Activated CD4-positive, alpha-beta memory T cell treated with anti-CD3 and anti-CD28 coated beads for 36 hours (primary cell): ENCODE measurements at regions of chr1 and their contacts with region 1.

Region 1: DNA sequence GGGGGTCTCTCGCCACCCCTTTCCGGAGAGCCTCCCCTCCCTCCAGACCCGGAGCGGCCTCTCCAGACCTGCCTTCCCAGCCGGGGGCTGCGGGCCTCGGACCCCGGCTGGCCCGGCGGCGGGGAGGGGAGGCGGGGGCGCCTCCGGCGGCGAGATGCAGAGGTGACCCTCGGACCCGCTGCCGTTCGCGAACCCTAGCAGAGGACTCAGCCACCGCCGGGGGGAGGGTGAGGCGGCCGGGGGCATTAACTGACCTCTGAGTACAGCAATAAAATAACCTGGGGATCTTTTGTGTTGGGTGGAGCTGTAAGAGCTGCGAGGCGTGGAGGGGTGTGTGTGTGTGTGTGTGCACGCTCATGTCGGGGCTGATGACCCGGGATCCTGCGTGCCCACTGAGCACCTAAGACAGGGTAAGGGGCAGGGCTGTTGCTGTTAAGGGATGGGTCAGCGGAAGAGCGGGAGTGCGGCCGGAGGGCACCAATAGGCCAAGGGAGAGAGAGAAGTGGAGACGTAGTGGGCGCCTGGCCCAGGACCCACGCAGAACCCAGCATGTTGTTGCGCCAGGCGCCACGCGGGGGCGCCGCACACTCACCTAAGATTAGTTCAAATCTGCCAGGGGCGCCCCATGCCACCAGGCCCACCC is 6.3 kb downstream of the HAPLN2 start:
- DNase-seq: peak; percentile 64
- H3K4me3 Mint-ChIP-seq: peak overlapping the region; percentile 48
- H3K27ac Mint-ChIP-seq: no peak overlapping the region
- H3K4me1 Mint-ChIP-seq: peaks cover 10% of the 10 kb centered on the region
- H3K27me3 Mint-ChIP-seq: peaks cover 46% of the 10 kb centered on the region

Region 2: DNA sequence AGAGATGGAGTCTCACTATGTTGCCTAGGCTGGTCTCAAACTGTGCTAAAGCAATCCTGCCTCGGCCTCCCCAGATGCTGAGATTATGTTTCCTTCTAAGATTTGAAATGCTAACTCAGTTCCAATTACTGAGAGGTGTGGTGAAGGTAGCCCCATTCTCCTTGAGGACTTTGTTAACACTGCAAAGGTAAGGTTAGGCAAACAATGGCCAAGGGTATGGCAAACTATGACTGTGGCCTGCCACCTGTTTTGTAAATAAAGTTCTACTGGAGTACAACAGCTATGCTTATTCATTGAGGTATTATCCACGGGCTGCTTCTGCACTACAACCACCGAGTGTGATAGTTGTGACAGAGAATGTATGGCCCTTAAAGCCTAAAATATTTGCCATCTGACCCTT is 704.8 kb before region 1 on chr1:
- CTCF ChIA-PET with region 1: no interaction called
- POLR2A ChIA-PET with region 1: no interaction called
- intact Hi-C with region 1: no loop called
- DNase-seq: no peak
- H3K4me3 Mint-ChIP-seq: no peak overlapping the region
- H3K27ac Mint-ChIP-seq: peak overlapping the region; percentile 42
- H3K4me1 Mint-ChIP-seq: peaks cover 2% of the 10 kb centered on the region
- H3K27me3 Mint-ChIP-seq: no peaks in the 10 kb centered on the region

Region 3: GRCh38 chr1:156259805-156260204 is 365.8 kb before region 1 on chr1:
- CTCF ChIA-PET with region 1: no interaction called
- POLR2A ChIA-PET with region 1: no interaction called
- intact Hi-C with region 1: no loop called
- DNase-seq: no peak
- H3K4me3 Mint-ChIP-seq: no peak overlapping the region
- H3K27ac Mint-ChIP-seq: peak overlapping the region; percentile 13
- H3K4me1 Mint-ChIP-seq: peaks cover 4% of the 10 kb centered on the region
- H3K27me3 Mint-ChIP-seq: no peaks in the 10 kb centered on the region

Region 4: DNA sequence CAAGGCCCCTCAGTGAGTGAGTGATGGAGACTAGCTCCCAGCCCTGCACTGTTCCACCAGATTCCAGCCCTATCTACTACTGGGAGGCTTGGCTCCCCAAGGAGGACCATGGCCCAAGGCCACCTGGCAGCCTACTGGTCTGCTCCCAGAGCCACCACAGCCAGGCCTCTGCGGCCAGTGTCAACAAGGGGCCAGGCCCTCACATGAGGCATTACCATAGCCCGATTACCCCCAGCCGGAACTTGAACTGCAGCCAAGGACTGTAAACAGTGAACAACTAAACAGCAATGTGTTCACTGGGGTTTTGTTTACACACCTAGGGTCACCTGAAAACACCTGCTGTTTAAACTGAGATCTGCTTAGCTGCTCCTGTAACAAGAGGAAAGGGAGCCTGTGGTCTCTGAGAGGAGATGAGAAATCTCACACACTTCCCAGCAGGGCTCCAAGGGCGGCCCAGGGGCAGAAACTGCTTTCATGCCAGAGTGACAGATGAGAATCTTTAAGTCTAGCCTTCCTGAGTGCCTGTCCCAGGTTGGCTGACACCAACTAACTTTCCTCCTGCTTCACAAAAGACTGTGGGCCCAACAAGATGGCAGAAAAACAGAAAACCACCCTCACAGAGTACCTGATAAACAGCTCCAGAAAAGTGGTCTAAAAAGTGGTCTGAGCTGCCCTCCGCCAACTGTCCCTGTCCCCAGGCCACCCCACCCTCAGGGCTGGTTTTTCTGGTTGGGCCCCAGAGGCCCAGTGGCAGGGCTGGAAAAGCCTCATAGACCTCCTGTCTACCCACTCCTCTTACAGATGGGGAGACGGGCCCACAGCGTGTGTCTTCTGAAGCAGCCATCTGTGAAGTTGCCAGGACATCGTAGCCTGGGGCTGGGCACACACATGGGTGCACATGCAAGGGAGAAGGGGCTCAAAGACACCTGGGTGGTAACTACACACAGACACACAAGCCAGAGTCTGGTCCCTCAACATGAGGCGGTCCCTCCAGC is 153.8 kb before region 1 on chr1:
- CTCF ChIA-PET with region 1: no interaction called
- POLR2A ChIA-PET with region 1: no interaction called
- intact Hi-C with region 1: no loop called
- DNase-seq: no peak
- H3K4me3 Mint-ChIP-seq: no peak overlapping the region
- H3K27ac Mint-ChIP-seq: peak overlapping the region; percentile 49
- H3K4me1 Mint-ChIP-seq: peaks cover 7% of the 10 kb centered on the region
- H3K27me3 Mint-ChIP-seq: no peaks in the 10 kb centered on the region

Region 5: DNA sequence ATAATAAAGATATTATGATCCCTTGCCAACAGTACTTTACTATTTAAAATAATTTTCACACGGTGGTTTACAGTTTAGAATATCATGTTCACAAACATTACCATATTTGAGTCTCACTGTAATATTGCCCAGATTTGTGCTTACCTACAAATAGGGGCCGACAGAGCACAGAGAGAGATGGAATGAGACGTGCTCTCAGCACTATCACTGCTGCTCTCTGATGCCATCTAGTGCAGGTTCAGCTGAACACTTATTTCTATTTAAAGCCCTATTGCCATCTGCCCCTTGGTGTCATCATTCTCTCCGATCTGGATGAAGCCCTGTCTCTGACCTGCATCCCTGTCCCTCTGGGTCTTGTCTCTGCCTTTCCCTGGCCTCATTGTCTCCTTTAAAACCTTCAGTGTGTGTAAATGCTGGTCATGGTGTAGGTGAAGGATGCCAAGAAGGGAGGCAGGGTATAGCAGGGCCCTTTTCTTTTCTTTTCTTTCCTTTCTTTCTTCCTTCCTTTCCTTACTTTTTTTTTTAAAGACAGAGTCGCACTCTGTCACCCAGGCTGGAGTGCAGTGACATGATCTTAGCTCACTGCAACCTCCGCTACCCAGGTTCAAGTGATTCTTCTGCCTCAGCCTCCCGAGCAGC is 17.4 kb before region 1 on chr1:
- CTCF ChIA-PET with region 1: interaction called, 32 read pairs
- POLR2A ChIA-PET with region 1: no interaction called
- intact Hi-C with region 1: loop called (anchors 1 kb)
- DNase-seq: peak; percentile 66
- H3K4me3 Mint-ChIP-seq: no peak overlapping the region
- H3K27ac Mint-ChIP-seq: no peak overlapping the region
- H3K4me1 Mint-ChIP-seq: peaks cover 3% of the 10 kb centered on the region
- H3K27me3 Mint-ChIP-seq: peaks cover 9% of the 10 kb centered on the region

Region 6: GRCh38 chr1:156652131-156652991 is 26.8 kb after region 1 on chr1:
- CTCF ChIA-PET with region 1: interaction called, 209 read pairs
- POLR2A ChIA-PET with region 1: no interaction called
- intact Hi-C with region 1: loop called (anchors 1 kb)
- DNase-seq: peak; percentile 32
- H3K4me3 Mint-ChIP-seq: no peak overlapping the region
- H3K27ac Mint-ChIP-seq: no peak overlapping the region
- H3K4me1 Mint-ChIP-seq: peaks cover 8% of the 10 kb centered on the region
- H3K27me3 Mint-ChIP-seq: peaks cover 75% of the 10 kb centered on the region

Region 7: GRCh38 chr1:156677616-156678596 is 52.3 kb after region 1 on chr1:
- CTCF ChIA-PET with region 1: interaction called, 92 read pairs
- POLR2A ChIA-PET with region 1: no interaction called
- intact Hi-C with region 1: loop called (anchors 1 kb)
- DNase-seq: peak; percentile 44
- H3K4me3 Mint-ChIP-seq: no peak overlapping the region
- H3K27ac Mint-ChIP-seq: no peak overlapping the region
- H3K4me1 Mint-ChIP-seq: peaks cover 12% of the 10 kb centered on the region
- H3K27me3 Mint-ChIP-seq: peaks cover 56% of the 10 kb centered on the region

Region 8: GRCh38 chr1:156744786-156745420 is 119.3 kb after region 1 on chr1:
- CTCF ChIA-PET with region 1: no interaction called
- POLR2A ChIA-PET with region 1: no interaction called
- intact Hi-C with region 1: no loop called
- DNase-seq: no peak
- H3K4me3 Mint-ChIP-seq: no peak overlapping the region
- H3K27ac Mint-ChIP-seq: peak overlapping the region; percentile 94
- H3K4me1 Mint-ChIP-seq: peaks cover 70% of the 10 kb centered on the region
- H3K27me3 Mint-ChIP-seq: no peaks in the 10 kb centered on the region